Mammary epithelial cell (primary cell): ENCODE measurements at regions of chr3 and their contacts with region 1.

Region 1: DNA sequence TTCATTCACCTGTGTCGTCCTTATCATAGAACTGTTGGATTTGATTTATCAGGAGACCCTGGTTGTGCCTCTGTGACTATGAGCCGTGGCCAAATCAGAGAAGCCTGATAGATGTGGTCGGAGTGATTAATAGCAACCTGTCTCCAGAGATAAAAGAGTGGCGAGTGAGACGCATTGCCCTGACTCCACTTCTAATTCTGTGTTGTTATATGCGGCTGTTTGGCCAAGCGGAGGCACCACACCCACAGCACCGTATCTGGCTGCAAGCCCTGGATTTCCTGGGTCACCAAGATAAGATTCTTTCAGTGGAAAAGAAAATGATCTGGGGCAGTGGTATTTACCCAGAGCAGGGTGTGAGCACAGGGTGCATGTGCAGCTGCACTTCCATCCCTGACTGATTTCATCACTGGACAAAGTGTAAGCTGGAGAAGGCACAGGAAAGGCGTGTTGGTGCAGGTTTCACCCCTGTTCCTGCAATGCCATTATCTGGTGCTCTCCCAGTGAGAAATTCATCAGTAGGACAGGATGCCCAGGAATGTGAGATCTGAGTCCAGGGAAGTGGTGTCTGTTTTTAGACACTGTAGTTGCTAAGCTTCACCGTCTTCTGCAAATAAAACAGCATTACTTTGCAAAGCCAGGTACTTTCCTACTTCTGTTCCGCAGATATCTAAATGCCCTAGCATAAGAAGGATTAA is 84.6 kb downstream of the CD47 start:
- DNase-seq: peak; percentile 94
- H3K4me3 ChIP-seq: peak overlapping the region in 1 of 3 experiments; percentile 15
- H3K27ac ChIP-seq: peak overlapping the region; percentile 88
- H3K4me1 ChIP-seq: peaks cover 24% of the 10 kb centered on the region
- H3K27me3 ChIP-seq: no peaks in the 10 kb centered on the region
- CTCF ChIP-seq: no peak

Region 2: GRCh38 chr3:107846279-107846852 is 159.9 kb before region 1 on chr3:
- CTCF ChIA-PET with region 1: no interaction called
- dilution Hi-C with region 1: no loop called
- in situ Hi-C with region 1: no loop called
- intact Hi-C with region 1: no loop called
- DNase-seq: peak; percentile 25
- H3K4me3 ChIP-seq: no peak overlapping the region
- H3K27ac ChIP-seq: no peak overlapping the region
- H3K4me1 ChIP-seq: no peaks in the 10 kb centered on the region
- H3K27me3 ChIP-seq: no peaks in the 10 kb centered on the region
- CTCF ChIP-seq: peak; percentile 56 to 71

Region 3: DNA sequence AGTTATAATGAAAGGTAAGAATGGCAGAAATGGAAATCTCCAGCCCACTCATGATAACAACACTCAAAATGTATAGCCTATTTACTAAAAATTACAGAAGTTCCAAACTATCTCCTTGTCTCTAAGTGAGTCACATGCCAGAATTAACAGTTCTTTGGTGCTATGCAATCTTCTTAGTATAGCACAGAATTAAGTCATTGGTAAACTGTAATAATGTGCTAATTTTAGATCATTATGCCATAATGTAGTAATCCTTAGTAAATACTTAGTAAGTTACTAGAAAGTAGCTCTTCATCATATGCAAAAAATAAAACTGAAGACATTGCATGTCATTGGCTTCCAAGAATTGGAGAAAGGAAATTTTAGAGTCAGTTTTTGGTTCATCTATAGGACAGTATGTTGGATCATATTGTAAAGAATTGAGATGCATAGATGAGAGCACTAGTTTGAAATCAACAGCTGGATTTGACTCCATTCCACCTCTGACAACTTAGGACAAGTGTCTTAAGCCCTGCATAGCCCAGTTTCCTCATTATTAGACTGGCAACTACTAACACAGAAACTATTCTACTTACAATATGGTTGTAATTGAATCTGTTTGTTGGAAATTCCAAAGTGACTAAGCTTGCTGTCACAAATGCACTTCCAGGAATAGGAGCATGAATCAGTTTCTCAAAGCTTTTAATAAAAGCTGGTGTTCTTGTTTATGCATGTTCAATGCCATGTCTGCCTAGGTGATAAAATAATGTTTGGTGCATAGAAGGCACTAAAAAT is 124.7 kb after region 1 on chr3:
- CTCF ChIA-PET with region 1: no interaction called
- dilution Hi-C with region 1: no loop called
- in situ Hi-C with region 1: no loop called
- intact Hi-C with region 1: loop called (anchors 1 kb)
- DNase-seq: peak; percentile 96
- H3K4me3 ChIP-seq: peak overlapping the region in 1 of 3 experiments; percentile 1
- H3K27ac ChIP-seq: peak overlapping the region; percentile 96
- H3K4me1 ChIP-seq: peaks cover 40% of the 10 kb centered on the region
- H3K27me3 ChIP-seq: no peaks in the 10 kb centered on the region
- CTCF ChIP-seq: no peak